GM12878 (cell line): ENCODE measurements at regions of chr17 and their contacts with region 1.

Region 1: DNA sequence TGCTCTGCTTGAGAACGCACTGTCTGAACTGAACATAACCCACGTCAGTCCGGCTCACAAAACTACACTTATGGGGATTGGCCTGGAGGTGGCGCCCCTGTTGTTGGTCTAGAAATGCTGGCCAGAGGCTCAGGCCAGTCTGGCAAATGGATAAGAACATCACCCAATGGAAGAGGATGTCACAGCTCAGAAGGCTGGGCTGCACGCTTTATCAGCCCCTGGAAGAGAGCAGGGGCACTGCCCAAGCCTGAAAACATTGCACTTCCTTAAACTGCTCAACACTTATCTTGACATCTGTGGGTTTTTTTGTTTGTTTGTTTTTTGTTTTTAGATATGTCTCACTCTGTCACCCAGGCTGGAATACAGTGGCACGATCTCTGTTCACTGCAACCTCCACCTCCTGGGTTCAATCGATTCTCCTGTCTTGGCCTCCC is 24.8 kb upstream of the BPTF start:
- DNase-seq: peak; percentile 59
- ATAC-seq: peak; percentile 96
- H3K4me3 ChIP-seq: no peak overlapping the region
- H3K27ac ChIP-seq: no peak overlapping the region
- H3K4me1 ChIP-seq: no peaks in the 10 kb centered on the region
- H3K27me3 ChIP-seq: no peaks in the 10 kb centered on the region
- CTCF ChIP-seq: peak; percentile 83 to 91 (median 84); a peak in 5 of 6 replicates
- EP300 ChIP-seq: no peak
- POLR2A ChIP-seq: no peak
- RAD21 ChIP-seq: peak; percentile 97

Region 2: DNA sequence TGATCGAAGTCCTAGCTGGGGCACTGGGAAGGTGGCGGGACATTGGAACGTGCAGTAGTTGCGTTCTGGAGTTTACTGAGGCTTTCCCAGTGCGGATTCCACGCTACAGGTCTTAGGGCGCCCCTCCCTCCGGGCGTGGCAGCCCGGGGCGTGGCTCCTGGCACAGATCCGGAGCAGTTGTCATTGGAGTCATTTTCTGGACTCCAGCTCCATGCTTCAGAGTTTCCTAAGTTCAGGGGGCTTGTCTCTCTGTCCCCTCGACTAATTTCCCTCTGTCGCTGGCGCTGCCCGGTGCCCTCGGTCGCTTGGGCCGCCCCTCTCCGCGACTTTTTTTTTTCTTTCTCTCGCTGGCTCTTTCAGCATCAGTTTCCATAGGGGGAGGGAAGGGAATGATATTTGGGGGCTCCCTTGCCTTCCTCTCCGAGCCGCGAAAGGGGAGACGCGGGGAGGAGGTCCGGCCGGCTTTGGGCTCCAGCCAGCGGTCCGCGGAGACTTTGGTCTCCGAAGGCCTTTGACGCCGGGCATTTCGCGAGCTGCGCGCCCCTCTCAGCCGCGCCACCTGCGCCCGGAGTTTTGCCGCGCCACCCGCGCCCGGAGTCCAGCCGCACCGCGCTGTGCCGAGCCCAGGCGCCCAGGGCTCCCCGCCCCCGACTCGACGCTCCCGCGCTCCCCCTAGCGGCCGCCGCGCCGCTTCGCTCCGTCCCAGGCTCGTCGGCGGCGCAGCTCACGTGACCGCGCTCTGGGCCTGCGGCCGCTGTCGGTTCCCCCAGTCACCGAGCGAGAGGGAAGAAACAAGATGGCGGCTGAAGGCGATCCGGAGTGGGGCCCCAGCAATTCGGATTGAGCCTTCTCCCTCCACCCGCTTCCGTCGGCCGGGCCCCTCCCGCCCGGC is 24.5 kb after region 1 on chr17 and contains the start of gene BPTF:
- CTCF ChIA-PET with region 1: interaction called, 133 read pairs
- POLR2A ChIA-PET with region 1: interaction called, 7 read pairs
- RAD21 ChIA-PET with region 1: interaction called, 34 read pairs
- SMC1A ChIA-PET with region 1: interaction called, 63 read pairs
- in situ Hi-C with region 1: no loop called
- intact Hi-C with region 1: loop called (anchors 1 kb)
- DNase-seq: peak; percentile 72
- ATAC-seq: peak; percentile 88
- H3K4me3 ChIP-seq: peak within 1 kb of the TSS; percentile 89
- H3K27ac ChIP-seq: peak within 1 kb of the TSS; percentile 83
- H3K4me1 ChIP-seq: peaks cover 27% of the 10 kb centered on the region
- H3K27me3 ChIP-seq: no peaks in the 10 kb centered on the region
- CTCF ChIP-seq: peak; percentile 79 to 97 (median 93); a peak in 4 of 6 replicates
- EP300 ChIP-seq: peak in 1 of 2 experiments; percentile 27; a peak in 1 of 4 replicates
- POLR2A ChIP-seq: peak; percentile 89
- RAD21 ChIP-seq: peak; percentile 73
- polyA plus RNA-seq, gene BPTF: 32.9 to 39.7 TPM

Region 3: DNA sequence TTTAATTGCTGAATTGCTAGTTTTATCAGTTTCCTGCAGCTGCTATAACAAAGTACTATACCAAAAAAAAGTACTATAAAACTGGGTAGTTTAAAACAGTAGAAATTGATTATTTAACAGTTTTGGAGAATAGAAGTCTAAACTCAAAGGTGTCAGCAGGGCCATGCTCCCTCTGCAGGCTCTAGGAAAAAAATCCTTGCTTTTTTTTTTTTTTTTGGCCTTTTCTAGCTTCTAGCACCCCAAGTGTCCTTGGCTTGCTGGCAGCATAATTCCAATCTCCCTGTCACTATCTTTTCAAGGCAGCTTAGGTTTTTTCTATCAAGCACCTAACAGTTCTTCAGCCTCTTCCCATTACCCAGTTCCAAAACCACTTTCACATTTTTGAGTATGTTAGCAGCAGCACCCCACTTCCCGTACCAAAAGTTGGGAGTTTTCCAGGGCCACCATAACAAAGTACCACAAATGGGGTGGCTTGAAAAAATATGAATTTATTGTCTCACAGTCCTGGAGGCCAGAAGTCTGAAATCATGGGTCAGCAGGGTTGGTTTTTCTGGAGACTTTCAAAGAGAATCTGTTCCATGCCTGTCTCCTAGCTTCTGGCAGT is 62.2 kb after region 1 on chr17:
- CTCF ChIA-PET with region 1: interaction called, 14 read pairs
- POLR2A ChIA-PET with region 1: no interaction called
- RAD21 ChIA-PET with region 1: interaction called, 6 read pairs
- SMC1A ChIA-PET with region 1: interaction called, 8 read pairs
- in situ Hi-C with region 1: no loop called
- intact Hi-C with region 1: loop called (anchors 2 kb)
- DNase-seq: no peak
- ATAC-seq: no peak; the same call in 2 of the 3 replicates
- H3K4me3 ChIP-seq: no peak overlapping the region
- H3K27ac ChIP-seq: no peak overlapping the region
- H3K4me1 ChIP-seq: peaks cover 7% of the 10 kb centered on the region; the same call in 1 of the 2 replicates
- H3K27me3 ChIP-seq: no peaks in the 10 kb centered on the region
- CTCF ChIP-seq: 0 out of 6 replicates have a peak, but pooled peaks of 1 of the 3 experiments have one; percentile 4
- EP300 ChIP-seq: no peak
- POLR2A ChIP-seq: no peak
- RAD21 ChIP-seq: no peak

Region 4: GRCh38 chr17:67891581-67892054 is 91.1 kb after region 1 on chr17:
- CTCF ChIA-PET with region 1: interaction called, 11 read pairs
- POLR2A ChIA-PET with region 1: no interaction called
- RAD21 ChIA-PET with region 1: interaction called, 3 read pairs
- SMC1A ChIA-PET with region 1: interaction called, 4 read pairs
- in situ Hi-C with region 1: no loop called
- intact Hi-C with region 1: no loop called
- DNase-seq: no peak
- ATAC-seq: no peak
- H3K4me3 ChIP-seq: no peak overlapping the region
- H3K27ac ChIP-seq: no peak overlapping the region
- H3K4me1 ChIP-seq: no peaks in the 10 kb centered on the region
- H3K27me3 ChIP-seq: no peaks in the 10 kb centered on the region
- CTCF ChIP-seq: no peak
- EP300 ChIP-seq: no peak
- POLR2A ChIP-seq: no peak
- RAD21 ChIP-seq: no peak